Heart left ventricle (tissue), 16 donors: ENCODE measurements at regions of chr19 and their contacts with region 1.

Region 1: DNA sequence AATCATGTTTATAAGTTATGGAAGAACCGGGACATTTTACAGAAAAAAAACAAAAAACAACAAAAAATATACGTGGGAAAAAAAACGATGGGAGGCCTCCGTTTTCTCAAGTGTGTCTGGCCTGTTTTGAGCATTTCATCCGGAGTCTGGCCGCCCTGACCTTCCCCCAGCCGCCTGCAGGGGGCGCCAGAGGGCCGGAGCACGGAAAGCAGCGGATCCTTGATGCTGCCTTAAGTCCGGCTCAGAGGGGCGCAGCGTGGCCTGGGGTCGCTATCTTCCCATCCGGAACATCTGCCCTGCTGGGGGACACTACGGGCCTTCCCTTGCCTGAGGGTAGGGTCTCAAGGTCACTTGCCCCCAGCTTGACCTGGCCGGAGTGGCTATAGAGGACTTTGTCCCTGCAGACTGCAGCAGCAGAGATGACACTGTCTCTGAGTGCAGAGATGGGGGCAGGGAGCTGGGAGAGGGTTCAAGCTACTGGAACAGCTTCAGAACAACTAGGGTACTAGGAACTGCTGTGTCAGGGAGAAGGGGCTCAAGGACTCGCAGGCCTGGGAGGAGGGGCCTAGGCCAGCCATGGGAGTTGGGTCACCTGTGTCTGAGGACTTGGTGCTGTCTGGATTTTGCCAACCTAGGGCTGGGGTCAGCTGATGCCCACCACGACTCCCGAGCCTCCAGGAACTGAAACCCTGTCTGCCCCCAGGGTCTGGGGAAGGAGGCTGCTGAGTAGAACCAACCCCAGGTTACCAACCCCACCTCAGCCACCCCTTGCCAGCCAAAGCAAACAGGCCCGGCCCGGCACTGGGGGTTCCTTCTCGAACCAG is 1.8 kb upstream of the APOE start:
- DNase-seq: peak; percentile 59 to 87 (median 65)
- ATAC-seq: peak; percentile 48 to 79 (median 68)
- H3K4me3 ChIP-seq: no peak overlapping the region
- H3K27ac ChIP-seq: no peak overlapping the region
- H3K4me1 ChIP-seq: peaks cover 0 to 23% (median 6%) of the 10 kb centered on the region in 12 donors
- H3K27me3 ChIP-seq: peaks cover 0 to 34% (median 15%) of the 10 kb centered on the region in 9 donors
- CTCF ChIP-seq: peak; percentile 94 to 100 (median 99)
- POLR2A ChIP-seq: no peak

Region 2: DNA sequence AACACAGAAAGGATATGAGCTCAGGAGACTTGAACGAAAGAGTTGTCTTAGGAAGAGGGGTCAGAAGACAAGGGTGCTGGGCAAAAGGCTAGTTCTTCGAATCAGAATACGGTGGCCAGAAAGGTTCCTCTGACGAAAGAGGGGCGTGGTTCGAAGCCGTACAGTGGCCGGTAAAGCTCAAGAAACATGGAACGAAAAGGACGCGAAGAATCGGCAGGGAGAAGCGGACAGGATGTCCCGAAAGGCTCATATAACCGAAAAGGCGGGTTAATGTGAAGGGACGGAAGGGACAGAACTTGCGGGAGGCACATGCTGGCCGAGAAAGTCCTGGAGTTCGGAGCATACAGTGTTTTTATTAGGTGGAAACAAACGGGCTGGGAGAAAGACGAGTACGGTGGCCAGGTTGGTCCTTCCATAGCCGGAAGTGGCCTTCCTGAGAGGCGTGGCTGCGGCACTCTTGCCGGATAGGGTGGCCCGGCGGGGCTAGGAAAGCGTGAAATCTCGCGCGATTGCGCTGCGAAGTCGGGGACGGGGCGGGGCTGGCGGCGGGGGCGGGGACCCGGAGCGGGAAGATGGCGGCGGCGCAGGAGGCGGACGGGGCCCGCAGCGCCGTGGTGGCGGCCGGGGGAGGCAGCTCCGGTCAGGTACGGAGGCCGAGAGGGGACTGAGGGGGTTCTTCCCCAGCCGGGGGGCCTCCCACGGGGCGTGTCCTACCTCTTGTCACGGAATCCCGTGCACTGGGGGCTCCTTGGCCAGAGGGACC is 51.2 kb after region 1 on chr19 and contains the start of gene CLPTM1:
- intact Hi-C with region 1: loop called (anchors 1 to 5 kb)
- DNase-seq: peak; percentile 98 to 99 (median 98)
- ATAC-seq: peak; percentile 95 to 97 (median 96)
- H3K4me3 ChIP-seq: peak within 1 kb of the TSS; percentile 70 to 100 (median 90)
- H3K27ac ChIP-seq: peak within 1 kb of the TSS; percentile 89 to 98 (median 95)
- H3K4me1 ChIP-seq: peaks cover 0 to 64% (median 41%) of the 10 kb centered on the region in 12 donors
- H3K27me3 ChIP-seq: no peaks in the 10 kb centered on the region
- CTCF ChIP-seq: peak in 1 of 12 donors; percentile 8
- POLR2A ChIP-seq: peak in 1 of 2 donors; percentile 28
- total RNA-seq, gene CLPTM1: 89.2 to 118 (median 96.0) TPM

Region 3: DNA sequence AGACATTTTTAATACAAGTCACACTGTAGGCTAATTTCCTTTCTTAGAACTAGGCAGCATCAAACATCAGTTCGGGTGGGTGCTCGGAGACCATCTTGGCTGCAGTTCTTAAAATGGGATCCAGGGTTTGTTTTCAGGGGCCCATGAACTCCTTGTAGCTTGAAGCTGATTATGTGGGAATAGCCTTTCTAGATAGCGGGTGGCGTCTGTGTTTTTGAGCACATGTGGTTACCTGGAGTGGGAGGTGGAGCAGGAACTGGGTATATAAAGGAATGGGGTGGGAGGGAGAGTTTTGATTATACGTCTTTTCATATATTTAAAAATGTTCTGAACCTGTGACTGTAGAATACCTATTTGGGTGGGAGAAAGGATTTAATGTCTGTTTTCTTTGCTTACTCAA is 64.3 kb after region 1 on chr19:
- intact Hi-C with region 1: no loop called
- DNase-seq: no peak
- ATAC-seq: no peak
- H3K4me3 ChIP-seq: no peak overlapping the region
- H3K27ac ChIP-seq: no peak overlapping the region
- H3K4me1 ChIP-seq: no peaks in the 10 kb centered on the region
- H3K27me3 ChIP-seq: no peaks in the 10 kb centered on the region
- CTCF ChIP-seq: no peak
- POLR2A ChIP-seq: no peak

Region 4: GRCh38 chr19:45059278-45059965 is 155.6 kb after region 1 on chr19:
- intact Hi-C with region 1: loop called in 5 of 10 experiments (anchors 5 to 10 kb)
- DNase-seq: peak; percentile 60 to 81 (median 67)
- ATAC-seq: peak; percentile 45 to 78 (median 69)
- H3K4me3 ChIP-seq: no peak overlapping the region
- H3K27ac ChIP-seq: no peak overlapping the region
- H3K4me1 ChIP-seq: no peaks in the 10 kb centered on the region
- H3K27me3 ChIP-seq: no peaks in the 10 kb centered on the region
- CTCF ChIP-seq: peak; percentile 69 to 91 (median 83)
- POLR2A ChIP-seq: no peak

Region 5: GRCh38 chr19:45331423-45331822 is 427.6 kb after region 1 on chr19:
- intact Hi-C with region 1: loop called in 5 of 10 experiments (anchors 5 to 10 kb)
- DNase-seq: no peak
- ATAC-seq: no peak
- H3K4me3 ChIP-seq: no peak overlapping the region
- H3K27ac ChIP-seq: no peak overlapping the region
- H3K4me1 ChIP-seq: peaks cover 0 to 2% (median 0%) of the 10 kb centered on the region in 12 donors
- H3K27me3 ChIP-seq: no peaks in the 10 kb centered on the region
- CTCF ChIP-seq: no peak
- POLR2A ChIP-seq: no peak